AG04450 (cell line): ENCODE measurements at regions of chr1 and their contacts with region 1.

Region 1: GRCh38 chr1:167904652-167905130 is 9.2 kb downstream of the ADCY10 start:
- DNase-seq: no peak
- H3K4me3 ChIP-seq: no peak overlapping the region
- H3K27ac ChIP-seq: peak overlapping the region; percentile 69
- H3K27me3 ChIP-seq: no peaks in the 10 kb centered on the region
- CTCF ChIP-seq: no peak

Region 2: GRCh38 chr1:167881786-167882185 is 22.9 kb before region 1 on chr1:
- CTCF ChIA-PET with region 1: no interaction called
- POLR2A ChIA-PET with region 1: no interaction called
- DNase-seq: no peak
- H3K4me3 ChIP-seq: no peak overlapping the region
- H3K27ac ChIP-seq: no peak overlapping the region
- H3K27me3 ChIP-seq: no peaks in the 10 kb centered on the region
- CTCF ChIP-seq: no peak

Region 3: GRCh38 chr1:167936068-167936929 is 31.6 kb after region 1 on chr1 and contains the start of gene DCAF6:
- CTCF ChIA-PET with region 1: interaction called, 3 read pairs
- POLR2A ChIA-PET with region 1: interaction called, 12 read pairs
- DNase-seq: peak; percentile 96
- H3K4me3 ChIP-seq: peak within 1 kb of the TSS; percentile 93
- H3K27ac ChIP-seq: peak within 1 kb of the TSS; percentile 98
- H3K27me3 ChIP-seq: no peaks in the 10 kb centered on the region
- CTCF ChIP-seq: no peak
- polyA plus RNA-seq, gene DCAF6: 102 and 137 TPM in 2 replicates

Region 4: GRCh38 chr1:168097921-168098528 is 193.3 kb after region 1 on chr1:
- CTCF ChIA-PET with region 1: no interaction called
- POLR2A ChIA-PET with region 1: no interaction called
- DNase-seq: no peak
- H3K4me3 ChIP-seq: no peak overlapping the region
- H3K27ac ChIP-seq: no peak overlapping the region
- H3K27me3 ChIP-seq: no peaks in the 10 kb centered on the region
- CTCF ChIP-seq: no peak